ENCODE measurements at regions of chr19 and their contacts with region 1.

Region 1: DNA sequence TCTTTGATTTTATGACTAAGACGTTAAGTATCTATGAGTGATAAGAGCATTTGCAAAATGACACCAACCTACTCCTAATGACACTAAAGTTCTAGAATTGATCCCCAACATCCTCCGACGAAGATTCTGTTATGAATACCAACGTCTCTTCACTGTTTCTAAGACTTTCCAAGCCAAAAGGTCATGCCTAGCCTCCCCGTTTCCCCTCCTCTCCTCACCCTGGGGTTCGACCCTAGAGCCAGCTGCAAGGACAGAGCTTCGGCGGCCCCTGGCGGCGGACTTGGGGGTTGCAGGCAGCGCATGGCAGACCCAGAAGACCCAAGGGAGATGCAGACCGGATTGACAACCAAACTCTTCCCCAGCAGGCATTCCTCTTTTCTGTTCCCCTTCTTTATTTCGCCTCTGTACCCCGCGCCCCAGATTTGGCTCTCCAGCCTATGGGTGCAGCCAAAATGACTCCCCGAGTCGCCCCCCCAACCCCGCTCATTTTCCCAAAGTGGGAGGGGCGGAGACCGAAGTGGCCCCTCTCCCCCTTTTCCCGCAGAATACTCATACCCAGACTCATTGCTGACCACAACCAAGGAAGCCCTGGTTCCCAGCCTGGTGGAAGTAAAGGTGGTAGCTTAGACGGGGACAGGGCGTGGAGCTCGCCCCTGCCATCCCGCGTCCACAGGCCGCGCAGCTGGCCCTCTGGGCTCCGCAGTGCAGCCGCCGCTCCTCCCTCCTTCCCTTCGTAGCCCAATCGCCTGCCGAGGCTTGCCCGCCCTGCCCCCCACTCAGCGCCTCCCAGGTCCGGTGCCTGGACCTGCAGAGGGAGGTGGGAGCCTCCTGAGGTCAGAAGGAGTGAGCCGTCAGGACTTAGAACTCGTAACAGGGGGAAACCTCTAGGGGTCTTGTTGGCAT is 4.1 kb upstream of the EML2 start:
- DNase-seq: peak; percentile 94

Region 2: DNA sequence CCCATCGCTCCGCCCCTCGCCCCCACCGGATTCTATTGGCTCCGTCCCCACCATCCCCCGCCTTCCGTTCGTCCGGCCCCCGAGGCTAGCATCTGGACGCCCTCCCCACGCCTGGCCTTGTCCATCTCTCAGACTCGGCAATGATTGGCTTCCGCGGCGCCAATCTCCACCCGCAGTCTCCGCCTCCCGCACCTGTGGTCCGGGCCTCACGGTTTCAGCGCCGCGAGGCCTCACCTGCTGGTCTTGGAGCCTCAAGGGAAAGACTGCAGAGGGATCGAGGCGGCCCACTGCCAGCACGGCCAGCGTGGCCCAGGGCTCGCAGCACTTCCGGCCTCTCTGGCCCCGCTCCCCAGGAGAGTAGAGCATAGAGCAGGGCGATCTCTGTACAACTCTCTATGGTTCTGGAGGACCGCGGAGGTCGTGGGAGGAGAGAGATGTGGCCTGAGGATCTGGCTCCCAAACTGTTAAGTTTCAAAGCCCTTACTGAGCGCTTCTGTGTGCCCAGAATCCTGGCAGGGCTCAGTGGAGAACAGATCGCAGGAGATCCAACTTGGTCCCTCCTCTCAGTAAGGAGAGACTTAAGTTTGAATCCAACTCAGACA is 219.6 kb before region 1 on chr19 and contains the start of gene ERCC1:
- intact Hi-C with region 1: loop called (anchors 10 kb)
- DNase-seq: peak; percentile 95
- total RNA-seq, gene ERCC1: 89.0 TPM

Region 3: DNA sequence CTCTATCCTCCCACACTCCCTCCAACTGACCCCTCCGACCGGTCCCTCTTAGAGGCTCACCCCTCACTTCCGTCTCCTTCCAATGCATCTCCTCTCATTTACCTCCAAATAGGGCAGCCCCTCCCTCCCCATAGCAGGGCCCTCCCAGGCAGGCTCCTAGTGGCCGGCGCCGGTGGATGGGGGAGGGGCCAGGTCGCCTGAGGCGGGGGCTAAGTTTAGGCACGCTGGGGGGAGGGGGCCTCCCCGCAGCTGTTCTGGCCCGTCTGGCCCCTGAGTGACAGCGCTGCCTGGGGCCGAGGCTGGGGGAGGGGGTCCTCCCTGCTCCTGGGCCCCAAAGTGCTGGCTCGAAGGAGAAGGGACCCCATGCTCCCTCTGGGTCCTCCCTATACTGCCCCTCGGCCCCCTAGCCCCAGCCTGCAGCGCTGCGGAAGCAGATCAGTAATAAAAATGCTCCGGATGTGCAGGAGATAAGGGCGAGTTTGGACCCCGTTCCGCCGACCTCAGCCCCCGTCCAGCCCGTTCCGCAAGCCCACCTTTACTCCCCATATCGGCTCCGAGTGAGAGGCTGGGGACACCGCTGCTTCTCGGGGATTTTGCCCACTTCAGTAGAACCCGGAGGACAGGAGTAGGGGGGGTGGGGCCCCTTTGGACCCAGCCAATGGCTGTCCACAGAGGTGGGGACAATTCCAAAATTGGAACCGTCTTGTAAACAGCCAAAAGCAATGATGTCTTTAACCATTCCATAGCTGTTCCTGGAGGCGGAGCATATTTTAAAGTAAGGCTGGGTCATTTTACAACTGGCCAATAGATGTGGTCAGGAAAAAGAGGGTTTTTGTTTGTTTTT is 150.4 kb before region 1 on chr19:
- intact Hi-C with region 1: loop called (anchors 5 kb)
- DNase-seq: no peak

Region 4: GRCh38 chr19:45523642-45524256 is 119.5 kb before region 1 on chr19:
- intact Hi-C with region 1: loop called (anchors 1 kb)
- DNase-seq: peak; percentile 89

Region 5: GRCh38 chr19:45584332-45585157 is 58.7 kb before region 1 on chr19 and contains the start of gene OPA3:
- intact Hi-C with region 1: loop called (anchors 10 kb)
- DNase-seq: peak; percentile 100
- total RNA-seq, gene OPA3: 15.3 TPM

Region 6: GRCh38 chr19:45607071-45608029 is 35.9 kb before region 1 on chr19:
- intact Hi-C with region 1: loop called (anchors 2 kb)
- DNase-seq: peak; percentile 89

Region 7: GRCh38 chr19:45779231-45780145 is 136.2 kb after region 1 on chr19:
- intact Hi-C with region 1: no loop called
- DNase-seq: peak; percentile 87